CD4-positive, alpha-beta memory T cell (primary cell): ENCODE measurements at regions of chr12 and their contacts with region 1.

Region 1: GRCh38 chr12:79900951-79901350 is 33.9 kb downstream of the PPP1R12A start:
- DNase-seq: no peak
- H3K4me3 ChIP-seq: no peak overlapping the region
- H3K4me3 Mint-ChIP-seq: peak overlapping the region in 1 of 8 donors; percentile 26
- H3K27ac ChIP-seq: no peak overlapping the region
- H3K27ac Mint-ChIP-seq: no peak overlapping the region
- H3K4me1 ChIP-seq: peaks cover 49% of the 10 kb centered on the region
- H3K4me1 Mint-ChIP-seq: peaks cover 55 to 79% (median 70%) of the 10 kb centered on the region in 4 donors
- H3K27me3 ChIP-seq: no peaks in the 10 kb centered on the region
- H3K27me3 Mint-ChIP-seq: no peaks in the 10 kb centered on the region

Region 2: DNA sequence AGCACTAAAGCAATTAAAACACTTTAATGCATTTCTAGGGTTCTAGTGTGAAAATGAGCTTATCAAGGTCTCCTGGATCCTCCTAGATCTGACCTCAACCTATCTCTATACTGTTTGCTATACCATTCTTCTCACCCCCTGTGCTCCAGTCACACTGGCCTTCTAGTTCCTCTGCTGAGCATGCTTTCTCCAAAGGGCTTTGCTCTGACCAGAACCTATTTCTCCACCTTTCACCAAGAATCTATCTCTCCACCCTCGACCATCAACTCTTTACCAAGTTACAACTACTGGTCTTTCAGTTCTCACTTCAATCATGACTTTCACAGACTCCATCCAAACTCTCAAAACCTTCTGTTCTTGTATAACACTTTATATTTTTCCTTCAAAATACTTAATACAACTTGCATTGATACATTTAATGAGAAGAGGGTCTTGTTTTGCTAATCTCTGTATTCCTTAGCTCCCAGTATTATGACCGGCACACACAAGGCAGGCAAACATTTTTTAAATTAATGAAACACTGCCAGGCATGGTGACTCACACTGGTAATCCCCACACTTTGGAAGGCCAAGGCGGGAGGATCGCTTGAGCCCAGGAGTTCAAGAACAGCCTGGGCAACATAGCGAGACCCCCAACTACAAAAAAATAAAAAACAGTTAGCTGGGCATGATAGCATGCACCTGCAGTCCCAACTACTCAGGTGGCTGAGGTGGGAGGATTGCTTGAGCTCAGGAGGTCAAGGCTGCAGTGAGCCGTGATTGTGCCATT is 11.1 kb after region 1 on chr12:
- CTCF ChIA-PET with region 1: no interaction called
- POLR2A ChIA-PET with region 1: interaction called, 3 read pairs
- intact Hi-C with region 1: loop called (anchors 2 kb)
- DNase-seq: no peak
- H3K4me3 ChIP-seq: no peak overlapping the region
- H3K4me3 Mint-ChIP-seq: peak overlapping the region in 7 of 8 donors; percentile 6 to 54 (median 12)
- H3K27ac ChIP-seq: no peak overlapping the region
- H3K27ac Mint-ChIP-seq: peak overlapping the region in 5 of 7 donors; percentile 3 to 74 (median 34)
- H3K4me1 ChIP-seq: peaks cover 70% of the 10 kb centered on the region
- H3K4me1 Mint-ChIP-seq: peaks cover 49 to 83% (median 67%) of the 10 kb centered on the region in 4 donors
- H3K27me3 ChIP-seq: no peaks in the 10 kb centered on the region
- H3K27me3 Mint-ChIP-seq: no peaks in the 10 kb centered on the region

Region 3: DNA sequence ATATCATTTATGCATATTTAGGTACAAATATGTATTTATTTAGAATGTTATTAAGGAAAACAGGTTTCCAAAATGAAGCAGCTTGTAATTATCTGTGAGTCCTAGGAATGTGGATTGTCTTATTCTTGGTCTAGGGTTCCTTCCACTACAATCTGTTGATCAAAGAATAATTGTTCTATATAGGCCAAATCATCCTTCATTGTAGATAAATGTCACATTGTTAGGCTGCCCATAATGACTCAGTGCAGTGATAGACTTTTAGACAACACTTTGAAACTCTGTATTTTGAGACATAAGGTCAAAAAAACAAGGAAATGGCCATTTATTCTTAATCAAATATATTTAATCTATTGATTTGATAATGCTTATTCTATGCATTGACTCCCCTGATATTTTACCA is 1460.0 kb after region 1 on chr12:
- CTCF ChIA-PET with region 1: no interaction called
- POLR2A ChIA-PET with region 1: no interaction called
- intact Hi-C with region 1: no loop called
- DNase-seq: no peak
- H3K4me3 ChIP-seq: no peak overlapping the region
- H3K4me3 Mint-ChIP-seq: no peak overlapping the region
- H3K27ac ChIP-seq: no peak overlapping the region
- H3K27ac Mint-ChIP-seq: no peak overlapping the region
- H3K4me1 ChIP-seq: no peaks in the 10 kb centered on the region
- H3K4me1 Mint-ChIP-seq: no peaks in the 10 kb centered on the region
- H3K27me3 ChIP-seq: no peaks in the 10 kb centered on the region
- H3K27me3 Mint-ChIP-seq: no peaks in the 10 kb centered on the region